ENCODE measurements at regions of chr6 and their contacts with region 1.

Region 1: GRCh38 chr6:106223300-106223930 is 102.1 kb downstream of the ATG5 start:
- DNase-seq: peak; percentile 22 to 87 (median 68)
- ATAC-seq: peak; percentile 62 to 84 (median 69)
- H3K4me3 ChIP-seq: no peak overlapping the region
- H3K4me3 Mint-ChIP-seq: no peak overlapping the region
- H3K27ac ChIP-seq: no peak overlapping the region
- H3K27ac Mint-ChIP-seq: no peak overlapping the region
- H3K4me1 ChIP-seq: no peaks in the 10 kb centered on the region
- H3K4me1 Mint-ChIP-seq: peaks cover 24 to 30% (median 28%) of the 10 kb centered on the region in 3 donors
- H3K27me3 ChIP-seq: no peaks in the 10 kb centered on the region
- H3K27me3 Mint-ChIP-seq: no peaks in the 10 kb centered on the region

Region 2: DNA sequence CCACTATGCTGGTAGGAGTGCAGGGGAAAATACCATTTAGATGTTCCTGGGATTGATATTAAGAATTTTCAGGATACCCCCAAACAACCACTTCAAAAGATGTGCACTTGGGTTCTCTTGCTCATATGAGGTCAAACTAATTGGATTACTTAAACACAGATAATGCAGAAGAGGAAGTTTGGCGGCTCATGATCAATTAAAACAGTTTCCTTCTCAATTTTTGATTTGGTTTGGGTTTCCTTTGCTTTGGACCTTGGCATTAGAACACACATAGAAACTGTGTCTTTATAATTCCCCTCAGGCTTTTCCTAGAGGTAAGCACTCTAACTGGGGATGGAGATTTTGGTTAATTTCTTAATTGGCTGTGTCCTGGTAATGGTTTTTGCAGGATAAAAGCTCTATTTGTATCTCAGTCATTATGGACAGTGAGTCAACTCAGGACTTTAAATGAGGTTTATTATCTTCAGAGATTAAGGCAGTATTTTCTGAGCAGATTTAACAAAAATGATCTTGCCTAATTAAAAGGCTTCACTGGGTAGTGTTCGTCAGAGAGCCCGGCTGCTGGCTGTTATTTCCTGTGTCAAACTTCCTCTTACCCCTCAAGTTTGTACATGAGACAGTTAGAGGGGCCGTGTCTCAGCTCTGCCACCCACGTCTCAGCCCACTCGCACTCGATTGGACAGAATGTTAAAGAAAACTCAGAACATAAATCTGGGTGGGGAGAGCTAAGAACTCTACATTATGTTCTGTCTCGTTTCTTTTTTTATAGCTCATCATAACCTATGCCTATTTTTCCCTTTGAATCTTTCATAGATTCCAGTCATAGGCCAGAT is 770.3 kb before region 1 on chr6:
- CTCF ChIA-PET with region 1: interaction called in 1 of 2 experiments, 12 read pairs
- POLR2A ChIA-PET with region 1: no interaction called
- DNase-seq: peak; percentile 6 to 78 (median 58)
- ATAC-seq: peak; percentile 75 to 98 (median 93)
- H3K4me3 ChIP-seq: peak overlapping the region in 1 of 2 donors; percentile 40
- H3K4me3 Mint-ChIP-seq: peak overlapping the region; percentile 26 to 73 (median 63)
- H3K27ac ChIP-seq: peak overlapping the region; percentile 81
- H3K27ac Mint-ChIP-seq: peak overlapping the region; percentile 83 to 89
- H3K4me1 ChIP-seq: peaks cover 12 to 17% of the 10 kb centered on the region in 2 experiments
- H3K4me1 Mint-ChIP-seq: peaks cover 18 to 36% (median 26%) of the 10 kb centered on the region in 3 donors
- H3K27me3 ChIP-seq: no peaks in the 10 kb centered on the region
- H3K27me3 Mint-ChIP-seq: peaks cover 11 to 15% of the 10 kb centered on the region in 2 donors

Region 3: GRCh38 chr6:105733565-105734162 is 489.8 kb before region 1 on chr6:
- CTCF ChIA-PET with region 1: interaction called, 16 to 27 read pairs
- POLR2A ChIA-PET with region 1: interaction called in 1 of 2 experiments, 4 read pairs
- DNase-seq: peak in 1 of 35 experiments; percentile 65
- ATAC-seq: no peak
- H3K4me3 ChIP-seq: no peak overlapping the region
- H3K4me3 Mint-ChIP-seq: no peak overlapping the region
- H3K27ac ChIP-seq: no peak overlapping the region
- H3K27ac Mint-ChIP-seq: no peak overlapping the region
- H3K4me1 ChIP-seq: no peaks in the 10 kb centered on the region
- H3K4me1 Mint-ChIP-seq: peaks cover 7 to 9% (median 8%) of the 10 kb centered on the region in 3 donors
- H3K27me3 ChIP-seq: no peaks in the 10 kb centered on the region
- H3K27me3 Mint-ChIP-seq: no peaks in the 10 kb centered on the region

Region 4: DNA sequence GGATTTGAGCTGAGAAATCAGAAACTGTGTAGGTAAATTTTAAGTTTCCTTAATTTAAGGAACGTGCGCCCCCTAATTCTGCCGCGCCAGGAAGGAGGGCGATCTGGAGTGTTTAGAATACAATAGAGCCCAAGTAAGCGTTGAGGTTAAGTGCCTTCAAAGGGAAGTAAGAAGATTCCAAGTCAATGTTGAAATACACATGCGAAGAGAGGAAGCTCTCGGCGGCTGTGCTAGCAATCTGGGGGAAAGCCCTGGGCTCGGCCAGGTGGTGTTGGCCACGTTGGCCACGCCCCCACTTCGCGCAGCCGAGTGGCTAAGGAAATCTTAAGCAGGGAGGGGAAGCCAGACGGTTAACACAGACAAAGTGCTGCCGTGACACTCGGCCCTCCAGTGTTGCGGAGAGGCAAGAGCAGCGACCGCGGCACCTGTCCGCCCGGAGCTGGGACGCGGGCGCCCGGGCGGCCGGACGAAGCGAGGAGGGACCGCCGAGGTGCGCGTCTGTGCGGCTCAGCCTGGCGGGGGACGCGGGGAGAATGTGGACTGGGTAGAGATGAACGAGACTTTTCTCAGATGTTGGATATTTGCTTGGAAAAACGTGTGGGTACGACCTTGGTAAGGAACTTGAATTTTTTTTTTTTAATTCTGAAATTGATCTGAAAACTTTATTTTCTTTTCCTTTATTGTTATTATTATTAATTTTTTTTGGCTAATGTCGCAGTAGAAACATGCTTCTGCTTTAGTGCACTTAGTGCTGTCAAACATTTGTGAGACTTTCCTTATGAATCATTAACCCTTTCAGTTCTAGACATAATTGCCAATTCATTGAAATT is 137.2 kb before region 1 on chr6 and contains the start of gene PRDM1:
- CTCF ChIA-PET with region 1: interaction called, 8 to 49 read pairs
- POLR2A ChIA-PET with region 1: interaction called in 1 of 2 experiments, 3 read pairs
- DNase-seq: peak; percentile 51 to 91 (median 75)
- ATAC-seq: peak; percentile 78 to 93 (median 86)
- H3K4me3 ChIP-seq: peak within 1 kb of the TSS; percentile 35 to 46
- H3K4me3 Mint-ChIP-seq: peak within 1 kb of the TSS; percentile 80 to 90 (median 89)
- H3K27ac ChIP-seq: peak within 1 kb of the TSS; percentile 40
- H3K27ac Mint-ChIP-seq: peak within 1 kb of the TSS; percentile 48 to 70
- H3K4me1 ChIP-seq: peaks cover 42 to 49% of the 10 kb centered on the region in 2 experiments
- H3K4me1 Mint-ChIP-seq: peaks cover 78 to 91% (median 82%) of the 10 kb centered on the region in 3 donors
- H3K27me3 ChIP-seq: peaks cover 3 to 9% of the 10 kb centered on the region in 2 experiments
- H3K27me3 Mint-ChIP-seq: peaks cover 14 to 36% of the 10 kb centered on the region in 2 donors
- total RNA-seq, gene PRDM1: 21.9 to 108 (median 30.6) TPM

Region 5: DNA sequence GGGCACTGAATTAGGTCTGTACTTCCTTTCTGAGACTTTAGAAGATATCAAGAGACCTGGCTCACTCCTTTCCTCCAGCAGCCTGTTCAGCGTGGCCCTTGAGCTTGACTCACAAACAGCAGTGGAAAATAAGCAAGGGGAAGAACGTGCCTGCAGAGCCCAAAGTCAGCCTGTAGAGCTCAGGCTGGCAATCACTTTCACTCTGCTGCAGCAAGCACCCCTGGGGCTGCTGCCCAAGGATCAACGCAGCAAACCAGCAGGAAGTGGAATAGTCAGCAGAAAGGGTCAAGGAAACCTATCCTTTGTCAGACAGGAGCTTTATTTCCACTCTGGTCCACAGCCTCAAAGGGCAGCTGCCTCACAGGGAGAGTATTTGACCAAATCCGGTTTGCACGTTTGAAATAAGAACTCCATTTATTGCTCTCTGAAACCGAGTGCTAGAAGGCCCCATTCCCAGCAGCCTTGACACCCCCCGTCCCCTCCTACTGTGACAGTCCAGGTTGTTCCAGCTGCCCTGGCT is 59.9 kb before region 1 on chr6:
- CTCF ChIA-PET with region 1: interaction called in 1 of 2 experiments, 16 read pairs
- POLR2A ChIA-PET with region 1: no interaction called
- DNase-seq: peak in 26 of 35 experiments; percentile 17 to 66 (median 26)
- ATAC-seq: peak; percentile 65 to 76 (median 74)
- H3K4me3 ChIP-seq: no peak overlapping the region
- H3K4me3 Mint-ChIP-seq: peak overlapping the region; percentile 30 to 55 (median 51)
- H3K27ac ChIP-seq: peak overlapping the region; percentile 87
- H3K27ac Mint-ChIP-seq: peak overlapping the region; percentile 89 to 92
- H3K4me1 ChIP-seq: peaks cover 0 to 31% of the 10 kb centered on the region in 2 experiments
- H3K4me1 Mint-ChIP-seq: peaks cover 30 to 40% (median 30%) of the 10 kb centered on the region in 3 donors
- H3K27me3 ChIP-seq: no peaks in the 10 kb centered on the region
- H3K27me3 Mint-ChIP-seq: no peaks in the 10 kb centered on the region

Region 6: DNA sequence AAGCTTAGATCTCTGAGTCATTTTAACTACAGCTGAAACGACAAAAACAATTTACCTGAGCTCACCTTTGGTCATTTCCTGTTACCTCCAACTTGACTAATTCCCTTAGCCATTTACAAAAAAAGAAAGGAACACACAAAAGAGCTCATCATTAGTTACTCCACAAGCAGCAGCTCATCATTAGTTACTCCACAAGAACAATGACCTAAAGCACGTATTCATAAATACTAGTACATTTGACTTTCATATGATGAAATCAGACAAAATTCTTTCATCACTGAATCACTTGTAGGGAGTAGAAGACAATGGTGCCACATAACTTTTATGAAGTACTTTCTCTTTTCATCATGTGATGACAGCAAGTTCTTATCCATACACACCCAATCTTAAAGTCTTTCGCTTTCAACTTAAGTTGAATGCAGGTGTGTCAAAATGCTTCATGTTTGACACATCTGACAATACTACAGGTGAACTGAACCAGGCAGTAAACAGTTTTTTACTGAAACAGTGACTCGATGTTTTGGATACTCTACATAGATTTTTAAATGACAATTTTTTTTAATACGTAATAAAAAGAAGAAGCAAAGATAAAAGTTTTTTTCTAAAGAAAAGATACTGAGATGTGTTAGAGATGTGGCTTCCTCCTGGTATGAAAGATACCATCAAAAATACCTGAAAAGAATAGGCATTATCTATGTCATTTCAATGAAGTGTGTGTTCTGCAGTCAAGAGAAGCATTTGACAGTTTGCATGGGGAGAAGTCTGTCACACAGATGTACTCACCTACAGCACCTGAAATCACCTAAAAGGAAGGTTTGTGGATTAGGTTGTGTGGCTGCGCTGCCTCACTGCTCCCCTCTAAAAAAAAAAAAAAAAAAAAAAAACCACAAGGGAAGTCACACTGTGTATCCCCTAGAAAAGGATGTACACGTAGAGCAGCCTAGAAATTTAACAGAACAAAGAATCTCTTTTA is 28.2 kb before region 1 on chr6:
- CTCF ChIA-PET with region 1: interaction called, 5 to 16 read pairs
- POLR2A ChIA-PET with region 1: no interaction called
- DNase-seq: peak in 25 of 35 experiments; percentile 3 to 71 (median 22)
- ATAC-seq: peak; percentile 67 to 84 (median 72)
- H3K4me3 ChIP-seq: peak overlapping the region in 1 of 2 donors; percentile 3
- H3K4me3 Mint-ChIP-seq: peak overlapping the region; percentile 34 to 69 (median 52)
- H3K27ac ChIP-seq: peak overlapping the region; percentile 75
- H3K27ac Mint-ChIP-seq: peak overlapping the region; percentile 89 to 93
- H3K4me1 ChIP-seq: peaks cover 16 to 28% of the 10 kb centered on the region in 2 experiments
- H3K4me1 Mint-ChIP-seq: peaks cover 39 to 57% (median 43%) of the 10 kb centered on the region in 3 donors
- H3K27me3 ChIP-seq: no peaks in the 10 kb centered on the region
- H3K27me3 Mint-ChIP-seq: no peaks in the 10 kb centered on the region

Region 7: DNA sequence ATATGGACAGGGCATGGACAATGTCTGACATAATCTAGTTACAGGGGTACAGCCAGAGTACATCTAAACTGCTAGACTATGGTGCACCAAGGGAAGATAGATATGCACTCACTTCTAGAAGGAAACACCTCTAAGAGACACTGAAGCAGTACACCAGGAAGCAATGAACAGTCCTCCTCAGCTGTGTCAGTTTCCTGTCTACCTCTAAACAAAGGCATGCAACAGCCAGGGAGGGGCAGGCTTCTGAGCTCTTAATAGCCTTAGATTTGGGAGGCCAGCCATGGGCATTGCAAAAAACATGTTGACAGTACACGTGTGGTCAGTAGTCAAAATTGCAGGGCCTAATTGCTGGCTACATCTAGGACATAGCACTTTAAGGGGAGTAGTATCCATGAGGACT is 158.5 kb after region 1 on chr6:
- CTCF ChIA-PET with region 1: no interaction called
- POLR2A ChIA-PET with region 1: no interaction called
- DNase-seq: peak in 1 of 35 experiments; percentile 5
- ATAC-seq: peak in 3 of 4 experiments; percentile 42 to 57 (median 43)
- H3K4me3 ChIP-seq: no peak overlapping the region
- H3K4me3 Mint-ChIP-seq: no peak overlapping the region
- H3K27ac ChIP-seq: no peak overlapping the region
- H3K27ac Mint-ChIP-seq: no peak overlapping the region
- H3K4me1 ChIP-seq: peaks cover 0 to 2% of the 10 kb centered on the region in 2 experiments
- H3K4me1 Mint-ChIP-seq: peaks cover 0 to 8% (median 2%) of the 10 kb centered on the region in 3 donors
- H3K27me3 ChIP-seq: peaks cover 0 to 3% of the 10 kb centered on the region in 2 experiments
- H3K27me3 Mint-ChIP-seq: peaks cover 8 to 14% of the 10 kb centered on the region in 2 donors

Measured in T-cell (primary cell).